OCI-LY7 (cell line): ENCODE measurements at regions of chr4 and their contacts with region 1.

Region 1: DNA sequence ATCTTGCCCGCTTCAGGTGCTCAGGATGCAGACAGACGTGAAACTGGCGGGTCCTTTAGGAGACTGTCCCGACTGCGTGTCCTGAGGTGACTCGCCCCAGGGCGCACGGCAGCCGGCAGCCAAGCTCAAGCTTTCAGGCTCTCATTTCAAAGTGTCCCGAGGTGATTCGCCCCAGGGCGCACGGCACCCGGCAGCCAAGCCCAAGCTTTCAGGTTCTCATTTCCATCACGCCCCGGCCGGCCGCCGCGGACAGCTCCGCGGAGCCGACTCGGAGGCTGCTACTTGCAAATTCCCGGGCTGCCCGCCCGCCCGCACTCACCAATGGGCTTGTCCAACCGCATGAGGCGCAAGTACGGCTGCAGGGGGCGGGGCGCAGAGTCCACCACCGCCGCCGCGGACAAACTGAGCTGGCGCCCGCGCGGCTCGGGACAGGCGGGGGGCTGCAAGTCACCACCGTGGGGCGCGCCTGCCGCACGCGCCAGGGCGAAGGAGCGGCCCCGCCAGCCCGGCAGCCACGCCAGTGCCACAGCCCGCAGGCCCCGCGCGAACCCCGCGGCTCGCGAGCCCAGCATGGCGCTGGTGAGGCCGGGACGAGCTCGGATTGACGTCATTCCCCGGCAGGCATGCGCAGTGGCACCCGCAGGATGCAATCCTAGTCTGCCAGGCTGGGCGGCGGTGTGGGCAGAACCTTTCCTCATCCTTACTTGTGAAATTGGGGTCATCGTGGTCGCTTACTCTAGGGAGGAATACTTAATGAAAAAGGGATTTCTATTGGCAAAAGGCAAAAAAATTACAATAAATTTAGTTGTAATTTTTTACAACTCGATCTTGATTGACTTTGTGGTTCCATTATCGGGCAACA is at the start of gene COQ2:
- DNase-seq: peak; percentile 94
- H3K4me3 ChIP-seq: peak within 1 kb of the TSS; percentile 81
- H3K27ac ChIP-seq: peak within 1 kb of the TSS; percentile 58
- H3K4me1 ChIP-seq: peaks cover 40% of the 10 kb centered on the region
- CTCF ChIP-seq: peak; percentile 61
- total RNA-seq, gene COQ2: 12.1 and 12.8 TPM in 2 replicates

Region 2: DNA sequence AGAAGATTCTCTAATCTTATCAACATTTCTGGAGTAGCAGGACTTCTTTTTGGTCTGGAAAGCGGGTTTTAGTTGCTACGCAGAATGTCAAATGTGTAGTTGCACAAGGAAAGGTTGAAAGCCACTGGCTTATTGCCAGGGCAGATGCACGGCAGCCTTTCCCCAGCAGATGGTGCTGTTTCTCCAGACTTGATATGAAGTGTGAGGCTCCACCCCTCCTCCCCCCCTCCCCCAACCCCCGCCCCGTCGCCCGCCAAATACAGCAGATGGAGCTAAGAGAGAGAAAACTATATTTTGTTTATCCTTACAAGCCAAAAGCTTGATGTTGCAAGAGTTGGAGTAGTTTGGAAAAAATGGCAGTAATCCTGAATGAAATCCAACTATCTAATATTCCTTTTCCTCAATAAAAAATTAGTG is 822.0 kb before region 1 on chr4:
- CTCF ChIA-PET with region 1: interaction called, 3 read pairs
- POLR2A ChIA-PET with region 1: no interaction called
- intact Hi-C with region 1: loop called (anchors 10 kb)
- DNase-seq: peak; percentile 77
- H3K4me3 ChIP-seq: no peak overlapping the region
- H3K27ac ChIP-seq: no peak overlapping the region
- H3K4me1 ChIP-seq: no peaks in the 10 kb centered on the region
- CTCF ChIP-seq: peak; percentile 73

Region 3: GRCh38 chr4:83034630-83035494 is 249.6 kb before region 1 on chr4 and contains the start of gene COPS4:
- CTCF ChIA-PET with region 1: interaction called, 3 read pairs
- POLR2A ChIA-PET with region 1: interaction called, 16 read pairs
- intact Hi-C with region 1: loop called (anchors 1 kb)
- DNase-seq: peak; percentile 100
- H3K4me3 ChIP-seq: peak within 1 kb of the TSS; percentile 82
- H3K27ac ChIP-seq: peak within 1 kb of the TSS; percentile 78
- H3K4me1 ChIP-seq: peaks cover 33% of the 10 kb centered on the region
- CTCF ChIP-seq: peak; percentile 72
- total RNA-seq, gene COPS4: 38.9 and 44.2 TPM in 2 replicates

Region 4: GRCh38 chr4:83054928-83055327 is 229.5 kb before region 1 on chr4:
- CTCF ChIA-PET with region 1: no interaction called
- POLR2A ChIA-PET with region 1: interaction called, 3 read pairs
- intact Hi-C with region 1: loop called (anchors 2 kb)
- DNase-seq: peak; percentile 63
- H3K4me3 ChIP-seq: no peak overlapping the region
- H3K27ac ChIP-seq: no peak overlapping the region
- H3K4me1 ChIP-seq: no peaks in the 10 kb centered on the region
- CTCF ChIP-seq: peak; percentile 82

Region 5: GRCh38 chr4:83267121-83267829 is 17.1 kb before region 1 on chr4:
- CTCF ChIA-PET with region 1: interaction called, 3 read pairs
- POLR2A ChIA-PET with region 1: interaction called, 12 read pairs
- intact Hi-C with region 1: no loop called
- DNase-seq: no peak
- H3K4me3 ChIP-seq: no peak overlapping the region
- H3K27ac ChIP-seq: no peak overlapping the region
- H3K4me1 ChIP-seq: no peaks in the 10 kb centered on the region
- CTCF ChIP-seq: no peak

Region 6: GRCh38 chr4:83308672-83309071 is 24.2 kb after region 1 on chr4:
- CTCF ChIA-PET with region 1: no interaction called
- POLR2A ChIA-PET with region 1: no interaction called
- intact Hi-C with region 1: no loop called
- DNase-seq: no peak
- H3K4me3 ChIP-seq: no peak overlapping the region
- H3K27ac ChIP-seq: no peak overlapping the region
- H3K4me1 ChIP-seq: no peaks in the 10 kb centered on the region
- CTCF ChIP-seq: no peak

Region 7: GRCh38 chr4:83455281-83456129 is 171.1 kb after region 1 on chr4 and contains the starts of genes HELQ and MRPS18C:
- CTCF ChIA-PET with region 1: interaction called, 3 read pairs
- POLR2A ChIA-PET with region 1: interaction called, 3 read pairs
- intact Hi-C with region 1: loop called (anchors 10 kb)
- DNase-seq: peak; percentile 100
- H3K4me3 ChIP-seq: peak within 1 kb of the TSS; percentile 89
- H3K27ac ChIP-seq: peak within 1 kb of the TSS; percentile 62
- H3K4me1 ChIP-seq: peaks cover 37% of the 10 kb centered on the region
- CTCF ChIP-seq: peak; percentile 58
- total RNA-seq, gene HELQ: 63.3 and 67.1 TPM in 2 replicates
- total RNA-seq, gene MRPS18C: 38.1 and 41.4 TPM in 2 replicates

Region 8: DNA sequence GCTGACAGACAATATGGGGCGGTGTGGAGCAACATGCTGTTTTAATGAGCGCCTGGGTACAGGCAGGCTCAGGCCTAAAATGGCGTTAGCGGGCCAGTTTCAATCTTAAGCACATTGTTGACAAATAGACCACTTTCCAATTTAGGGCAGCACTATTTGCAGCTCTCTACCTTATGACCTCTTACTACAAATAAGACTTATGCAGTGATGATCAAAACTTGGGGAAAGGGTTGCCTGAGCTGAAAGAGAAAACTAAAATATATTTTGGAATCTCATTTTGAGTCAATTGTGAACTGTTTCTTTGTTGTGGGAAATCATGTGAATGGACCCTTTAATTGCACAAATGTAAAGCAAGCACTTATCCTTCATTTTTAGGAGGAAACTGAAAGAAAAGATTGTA is 226.0 kb after region 1 on chr4:
- CTCF ChIA-PET with region 1: no interaction called
- POLR2A ChIA-PET with region 1: no interaction called
- intact Hi-C with region 1: no loop called
- DNase-seq: no peak
- H3K4me3 ChIP-seq: no peak overlapping the region
- H3K27ac ChIP-seq: no peak overlapping the region
- H3K4me1 ChIP-seq: no peaks in the 10 kb centered on the region
- CTCF ChIP-seq: no peak

Region 9: DNA sequence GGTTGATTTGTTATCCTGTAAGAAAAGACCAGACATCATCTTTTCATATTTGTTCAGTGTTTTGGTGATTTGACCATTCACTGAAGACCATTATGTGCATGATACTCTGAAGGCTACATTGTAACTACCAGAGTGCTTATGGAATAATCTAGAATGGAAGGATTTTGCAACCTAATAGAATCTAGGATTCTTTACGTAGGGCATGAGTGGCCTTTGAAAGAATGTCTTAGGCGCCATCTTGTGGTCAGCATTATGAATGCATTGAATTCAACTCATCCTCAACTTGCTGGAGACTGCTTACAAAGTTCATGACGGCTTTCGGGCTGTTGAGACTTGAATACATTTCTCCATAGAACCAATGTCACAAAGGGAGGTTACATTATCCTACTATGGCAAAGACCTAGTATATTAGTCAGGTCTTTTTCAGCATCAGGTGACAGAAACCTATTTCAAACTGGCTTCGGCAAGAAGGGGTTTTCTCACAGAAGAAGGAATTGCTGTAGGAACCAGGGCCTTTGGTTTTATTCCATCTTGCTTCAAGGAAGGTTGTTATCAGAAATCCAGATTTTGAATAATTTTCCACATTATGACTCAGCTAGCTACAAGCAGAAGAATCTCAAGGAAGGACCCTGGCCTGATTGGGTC is 355.5 kb after region 1 on chr4:
- CTCF ChIA-PET with region 1: no interaction called
- POLR2A ChIA-PET with region 1: no interaction called
- intact Hi-C with region 1: loop called (anchors 10 kb)
- DNase-seq: peak; percentile 73
- H3K4me3 ChIP-seq: no peak overlapping the region
- H3K27ac ChIP-seq: no peak overlapping the region
- H3K4me1 ChIP-seq: no peaks in the 10 kb centered on the region
- CTCF ChIP-seq: peak; percentile 95